Aorta (tissue), 5 donors: ENCODE measurements at regions of chr4 and their contacts with region 1.

Region 1: DNA sequence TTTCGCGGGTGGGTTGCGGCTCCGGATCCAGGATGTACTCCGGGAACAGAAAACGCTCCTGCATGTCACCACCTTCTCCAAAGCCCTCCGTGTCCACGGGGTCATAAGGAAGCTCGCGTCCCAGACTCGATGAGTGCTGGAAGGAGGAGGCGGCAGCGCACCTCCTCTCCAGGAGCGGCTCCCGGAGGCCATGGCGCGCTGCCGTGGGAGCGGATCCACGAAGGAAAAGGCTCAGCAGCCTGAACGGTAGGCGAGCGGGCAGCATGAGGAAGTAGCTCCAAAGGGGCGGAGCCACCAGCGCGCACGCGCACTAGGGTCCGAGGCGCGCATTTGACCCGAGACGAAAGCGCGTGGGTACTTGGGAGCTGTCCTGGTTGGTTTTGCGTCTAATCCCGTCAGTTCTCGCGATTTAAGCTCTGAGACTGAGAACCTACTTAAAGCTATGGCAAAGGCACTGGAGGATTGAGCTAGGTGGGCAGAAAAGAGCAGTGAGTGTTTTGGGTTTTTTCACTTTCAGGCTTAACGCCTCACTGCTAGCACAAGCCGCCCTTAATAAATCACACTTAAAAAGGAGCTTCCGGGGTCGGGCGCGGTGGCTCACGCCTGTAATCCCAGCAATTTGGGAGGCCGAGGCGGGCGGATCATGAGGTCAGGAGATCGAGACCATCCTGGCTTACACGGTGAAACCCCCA is at the start of gene NOA1:
- DNase-seq: peak; percentile 98 to 99
- ATAC-seq: peak; percentile 97
- H3K4me3 ChIP-seq: peak within 1 kb of the TSS; percentile 88 to 98
- H3K27ac ChIP-seq: peak within 1 kb of the TSS in 1 of 2 donors; percentile 76
- H3K4me1 ChIP-seq: peaks cover 0 to 3% of the 10 kb centered on the region in 2 donors
- H3K27me3 ChIP-seq: no peaks in the 10 kb centered on the region
- total RNA-seq, gene NOA1: 10.0 to 12.9 TPM

Region 2: DNA sequence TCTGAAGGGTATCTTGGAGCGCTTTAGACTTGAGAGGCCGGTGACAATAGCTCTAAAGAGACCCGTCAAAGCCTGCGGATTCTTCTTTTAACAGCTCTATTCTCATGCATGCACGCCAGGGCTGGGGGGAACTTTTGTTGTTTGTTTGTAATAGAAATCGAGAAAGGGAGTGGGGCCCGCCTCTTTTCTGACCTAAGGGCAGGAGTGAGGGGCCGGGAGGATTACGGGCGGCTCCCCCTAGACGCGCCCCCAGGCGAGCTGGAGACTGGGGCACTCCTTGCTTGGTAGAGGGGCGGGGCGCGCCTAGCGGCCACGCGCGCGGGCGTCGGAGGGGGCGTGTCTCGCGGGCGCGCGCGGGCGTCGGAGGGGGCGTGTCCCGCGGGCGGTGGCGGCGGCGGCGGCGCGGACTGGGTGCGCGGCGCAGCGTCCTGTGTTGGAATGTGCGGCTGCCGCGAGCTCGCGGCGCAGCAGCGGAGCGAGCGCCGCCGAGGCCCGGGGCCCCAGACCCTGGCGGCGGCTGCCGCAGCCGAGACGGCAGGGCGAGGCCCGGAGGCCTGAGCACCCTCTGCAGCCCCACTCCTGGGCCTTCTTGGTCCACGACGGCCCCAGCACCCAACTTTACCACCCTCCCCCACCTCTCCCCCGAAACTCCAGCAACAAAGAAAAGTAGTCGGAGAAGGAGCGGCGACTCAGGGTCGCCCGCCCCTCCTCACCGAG is 69.8 kb before region 1 on chr4 and contains the start of gene REST:
- intact Hi-C with region 1: loop called (anchors 2 to 5 kb)
- DNase-seq: peak; percentile 81 to 92
- ATAC-seq: peak; percentile 94
- H3K4me3 ChIP-seq: peak within 1 kb of the TSS; percentile 82 to 95
- H3K27ac ChIP-seq: peak within 1 kb of the TSS; percentile 71 to 97
- H3K4me1 ChIP-seq: peaks cover 0 to 3% of the 10 kb centered on the region in 2 donors
- H3K27me3 ChIP-seq: no peaks in the 10 kb centered on the region
- total RNA-seq, gene REST: 33.5 to 39.1 TPM

Region 3: GRCh38 chr4:56961107-56961500 is 16.4 kb before region 1 on chr4:
- intact Hi-C with region 1: loop called in 1 of 2 experiments (anchors 1 kb)
- DNase-seq: no peak
- ATAC-seq: no peak
- H3K4me3 ChIP-seq: no peak overlapping the region
- H3K27ac ChIP-seq: no peak overlapping the region
- H3K4me1 ChIP-seq: peaks cover 0 to 4% of the 10 kb centered on the region in 2 donors
- H3K27me3 ChIP-seq: no peaks in the 10 kb centered on the region